ENCODE measurements at regions of chr13 and their contacts with region 1.

Region 1: GRCh38 chr13:95834134-95834765 is 157.3 kb downstream of the DNAJC3 start:
- DNase-seq: no peak
- H3K4me3 ChIP-seq: no peak overlapping the region
- H3K27ac ChIP-seq: no peak overlapping the region
- H3K4me1 ChIP-seq: peaks cover 0 to 12% (median 2%) of the 10 kb centered on the region in 3 donors
- H3K27me3 ChIP-seq: no peaks in the 10 kb centered on the region
- CTCF ChIP-seq: peak; percentile 61 to 92 (median 90)
- POLR2A ChIP-seq: no peak

Region 2: GRCh38 chr13:95624020-95624419 is 210.2 kb before region 1 on chr13:
- intact Hi-C with region 1: loop called (anchors 5 kb)
- DNase-seq: no peak
- H3K4me3 ChIP-seq: no peak overlapping the region
- H3K27ac ChIP-seq: no peak overlapping the region
- H3K4me1 ChIP-seq: peaks cover 0 to 17% (median 0%) of the 10 kb centered on the region in 3 donors
- H3K27me3 ChIP-seq: no peaks in the 10 kb centered on the region
- CTCF ChIP-seq: peak; percentile 43 to 65 (median 54)
- POLR2A ChIP-seq: no peak